Activated CD8-positive, alpha-beta T cell treated with anti-CD3 and anti-CD28 coated beads for 36 hours (primary cell): ENCODE measurements at regions of chr20 and their contacts with region 1.

Region 1: GRCh38 chr20:21702553-21703470 is 2.7 kb upstream of the PAX1 start:
- DNase-seq: peak; percentile 66
- ATAC-seq: peak; percentile 45
- H3K4me3 Mint-ChIP-seq: no peak overlapping the region
- H3K27ac Mint-ChIP-seq: no peak overlapping the region
- H3K4me1 Mint-ChIP-seq: peaks cover 3% of the 10 kb centered on the region
- H3K27me3 Mint-ChIP-seq: peaks cover 75% of the 10 kb centered on the region
- CTCF ChIP-seq: peak; percentile 46

Region 2: GRCh38 chr20:21513881-21514540 is 188.8 kb before region 1 on chr20 and contains the start of gene NKX2-2:
- CTCF ChIA-PET with region 1: no interaction called
- POLR2A ChIA-PET with region 1: no interaction called
- intact Hi-C with region 1: loop called (anchors 5 kb)
- DNase-seq: no peak
- ATAC-seq: no peak
- H3K4me3 Mint-ChIP-seq: peak within 1 kb of the TSS; percentile 33
- H3K27ac Mint-ChIP-seq: no peak within 1 kb of the TSS
- H3K4me1 Mint-ChIP-seq: peaks cover 31% of the 10 kb centered on the region
- H3K27me3 Mint-ChIP-seq: peaks cover 74% of the 10 kb centered on the region
- CTCF ChIP-seq: no peak
- total RNA-seq, gene NKX2-2: not detected

Region 3: DNA sequence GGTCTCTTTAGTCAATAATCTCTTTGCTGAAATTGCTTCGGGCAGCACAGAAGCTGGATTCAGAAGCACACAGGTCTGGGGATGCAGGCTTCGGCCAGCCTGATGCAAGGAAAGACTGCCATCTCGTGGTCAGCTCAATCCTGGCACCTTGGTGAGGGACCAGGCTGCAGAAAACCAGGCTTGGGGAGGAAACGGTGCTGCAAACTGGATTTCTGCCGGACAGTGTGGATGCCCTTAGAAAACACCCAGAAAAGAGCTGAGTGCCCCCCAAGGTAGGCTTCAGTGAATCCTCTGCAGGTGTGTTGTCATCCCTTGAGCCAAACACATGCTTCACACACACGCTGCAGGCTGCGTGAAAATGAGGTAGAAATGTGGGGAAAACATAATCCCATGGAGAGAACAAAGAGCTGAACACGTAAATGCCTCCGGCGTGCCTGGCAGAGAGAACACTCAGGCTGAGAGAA is 87.2 kb before region 1 on chr20:
- CTCF ChIA-PET with region 1: no interaction called
- POLR2A ChIA-PET with region 1: no interaction called
- intact Hi-C with region 1: no loop called
- DNase-seq: peak; percentile 61
- ATAC-seq: peak; percentile 65
- H3K4me3 Mint-ChIP-seq: no peak overlapping the region
- H3K27ac Mint-ChIP-seq: no peak overlapping the region
- H3K4me1 Mint-ChIP-seq: no peaks in the 10 kb centered on the region
- H3K27me3 Mint-ChIP-seq: peaks cover 15% of the 10 kb centered on the region
- CTCF ChIP-seq: peak; percentile 55

Region 4: GRCh38 chr20:21681234-21681921 is 21.4 kb before region 1 on chr20:
- CTCF ChIA-PET with region 1: no interaction called
- POLR2A ChIA-PET with region 1: no interaction called
- intact Hi-C with region 1: no loop called
- DNase-seq: no peak
- ATAC-seq: no peak
- H3K4me3 Mint-ChIP-seq: no peak overlapping the region
- H3K27ac Mint-ChIP-seq: no peak overlapping the region
- H3K4me1 Mint-ChIP-seq: no peaks in the 10 kb centered on the region
- H3K27me3 Mint-ChIP-seq: no peaks in the 10 kb centered on the region
- CTCF ChIP-seq: no peak